Posterior vena cava (tissue), 2 donors: ENCODE measurements at regions of chr15 and their contacts with region 1.

Region 1: DNA sequence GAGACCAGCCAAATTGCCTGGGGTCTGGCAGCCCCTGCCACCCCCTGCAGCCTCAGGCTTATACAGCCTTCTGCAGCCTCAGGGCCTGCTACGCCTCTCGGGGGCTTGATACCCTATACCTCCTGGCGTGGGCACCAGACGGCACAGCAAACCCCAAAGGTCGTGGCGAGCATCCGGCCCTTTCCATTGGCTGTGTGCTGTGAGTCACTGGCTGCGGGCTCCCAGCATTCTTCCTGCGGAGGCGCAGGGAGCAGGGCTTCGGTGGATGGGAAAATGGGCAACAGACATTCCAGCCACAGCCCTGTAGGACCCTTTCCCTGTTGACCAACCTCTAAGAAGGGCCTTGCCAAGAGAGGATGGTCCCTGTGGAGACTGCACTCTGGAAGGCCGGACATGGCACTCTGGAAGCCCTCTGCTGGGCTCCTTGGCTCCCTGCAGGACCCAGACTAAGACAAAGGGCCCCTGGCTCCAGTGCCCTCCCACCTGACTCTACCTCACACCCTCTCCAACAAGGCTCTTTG is 59.6 kb downstream of the ITGA11 start:
- DNase-seq: peak; percentile 40

Region 2: GRCh38 chr15:67945951-67946700 is 426.2 kb before region 1 on chr15:
- intact Hi-C with region 1: loop called in 1 of 2 experiments (anchors 10 kb)
- DNase-seq: no peak